ENCODE measurements at regions of chr17 and their contacts with region 1.

Region 1: DNA sequence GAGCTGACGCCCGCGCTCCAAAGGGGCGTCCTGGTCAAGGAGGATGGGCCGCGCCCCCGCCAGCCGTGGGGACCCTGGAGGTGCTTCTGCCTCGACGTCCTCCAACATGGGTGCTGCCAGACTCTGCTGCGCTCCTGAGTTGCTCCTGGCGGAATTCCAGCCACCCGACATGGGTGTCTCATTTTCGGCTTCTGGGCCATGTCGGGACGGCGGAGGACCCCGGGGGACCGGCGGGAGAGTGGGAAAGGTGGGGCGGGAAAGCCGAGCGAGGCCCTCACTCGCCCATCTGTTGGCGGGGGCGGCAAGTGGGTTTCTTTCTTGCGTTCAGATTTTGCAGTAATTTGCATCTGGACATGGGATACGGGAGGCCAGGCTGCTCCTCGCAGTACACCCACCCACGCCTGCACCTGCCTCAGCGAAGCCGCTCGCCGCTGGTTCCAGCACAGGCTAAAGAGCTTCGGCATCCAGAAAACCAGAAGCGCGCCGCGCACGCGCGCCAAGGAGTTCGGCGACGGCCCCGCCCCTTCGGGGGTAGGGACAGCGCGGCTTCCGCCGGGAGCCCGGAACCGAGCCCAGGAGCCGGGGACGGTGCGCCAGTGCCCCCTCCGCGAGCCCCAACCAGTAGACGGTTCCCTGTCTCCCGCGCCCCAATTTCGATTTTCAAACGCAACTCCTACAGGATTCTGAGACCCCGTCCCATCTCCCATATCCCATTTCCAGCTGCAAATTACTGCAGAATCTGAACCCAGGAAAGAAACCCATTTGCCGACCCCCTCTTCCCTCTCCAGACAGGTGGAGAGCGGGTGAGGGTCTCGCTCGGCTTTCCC is at the start of gene ARMC7:
- DNase-seq: peak; percentile 97
- CTCF ChIP-seq: no peak

Region 2: DNA sequence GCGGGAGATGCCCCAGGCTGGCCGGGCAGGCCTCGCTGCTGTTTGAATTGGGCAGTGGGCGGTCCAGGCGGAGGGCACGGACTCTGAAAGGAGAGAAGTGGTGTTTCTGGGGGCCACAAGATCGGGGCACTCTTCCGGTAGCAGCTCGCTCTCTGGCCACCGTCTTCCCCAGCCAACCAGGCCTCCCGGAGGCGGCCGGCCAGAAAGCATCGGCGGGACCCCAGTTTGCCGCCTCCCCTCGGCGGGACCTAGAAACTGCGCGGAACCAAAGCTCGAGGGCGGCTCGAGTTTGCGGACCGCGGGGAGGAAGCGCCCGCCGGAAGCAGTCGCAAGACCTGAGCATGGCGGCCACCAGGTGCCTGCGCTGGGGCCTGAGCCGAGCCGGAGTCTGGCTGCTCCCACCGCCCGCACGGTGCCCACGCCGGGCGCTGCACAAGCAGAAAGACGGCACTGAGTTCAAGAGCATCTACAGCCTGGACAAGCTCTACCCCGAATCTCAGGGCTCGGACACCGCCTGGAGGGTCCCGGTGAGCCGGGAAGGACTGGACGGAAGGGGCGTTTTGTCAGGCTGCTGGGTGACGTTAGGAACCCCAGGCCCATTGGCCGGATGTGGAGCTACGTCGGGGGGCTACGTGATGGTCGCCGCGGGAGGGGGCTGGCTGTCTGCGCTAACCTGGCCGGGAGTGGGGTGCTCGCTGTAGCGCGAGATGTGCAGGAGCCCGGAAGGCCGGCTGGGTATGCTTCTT is 97.1 kb before region 1 on chr17 and contains the start of gene MRPL58:
- CTCF ChIA-PET with region 1: interaction called, 13 read pairs
- POLR2A ChIA-PET with region 1: no interaction called
- DNase-seq: peak; percentile 94
- CTCF ChIP-seq: peak; percentile 39

Region 3: GRCh38 chr17:75069783-75070182 is 39.8 kb before region 1 on chr17:
- CTCF ChIA-PET with region 1: interaction called, 23 read pairs
- POLR2A ChIA-PET with region 1: no interaction called
- DNase-seq: no peak
- CTCF ChIP-seq: peak; percentile 35

Region 4: DNA sequence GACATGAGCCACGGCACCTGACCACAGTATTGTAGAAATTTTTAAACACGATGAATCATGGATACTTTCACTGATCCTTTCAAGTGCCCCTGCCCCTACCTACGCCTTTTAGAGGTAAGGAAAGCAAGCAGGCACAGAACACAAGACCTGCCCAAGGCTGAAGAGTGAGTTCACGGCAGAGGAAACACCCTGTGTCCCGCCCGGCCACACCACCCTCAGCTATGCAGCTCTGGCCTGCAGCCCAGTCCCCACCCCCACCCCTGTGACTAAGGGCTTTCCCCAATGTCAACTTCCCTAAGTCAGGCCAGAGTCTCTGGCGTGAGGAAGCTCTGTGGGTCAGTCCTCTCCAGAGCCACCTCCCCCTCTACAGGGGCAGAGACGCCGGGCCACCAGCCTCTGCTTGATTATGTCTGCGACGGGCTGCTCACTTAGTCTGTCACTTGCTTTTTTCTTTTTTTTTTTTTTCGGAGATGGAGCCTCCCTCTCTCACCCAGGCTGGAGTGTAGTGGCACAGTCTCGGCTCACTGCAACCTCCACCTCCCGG is 13.5 kb before region 1 on chr17:
- CTCF ChIA-PET with region 1: interaction called, 103 read pairs
- POLR2A ChIA-PET with region 1: no interaction called
- DNase-seq: peak; percentile 51
- CTCF ChIP-seq: no peak

Region 5: DNA sequence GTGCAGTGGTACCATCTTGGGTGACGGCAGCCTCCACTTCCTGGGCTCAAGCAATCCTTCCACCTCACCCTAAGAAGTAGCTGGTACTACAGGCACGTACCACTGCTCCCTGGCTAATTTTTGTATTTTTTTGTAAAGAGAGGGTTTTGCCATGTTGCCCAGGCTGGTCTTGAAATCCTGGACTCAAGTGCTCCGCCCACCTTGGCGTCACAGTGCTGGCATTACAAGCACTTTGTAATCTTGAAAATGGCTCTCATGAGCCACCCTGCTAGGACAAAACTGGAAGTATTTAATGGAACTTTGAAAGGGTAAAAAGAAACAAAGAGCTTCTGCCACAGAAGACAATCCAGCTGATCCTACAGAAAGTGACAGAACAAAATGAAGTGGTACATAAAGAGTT is 63.9 kb after region 1 on chr17:
- CTCF ChIA-PET with region 1: interaction called, 123 read pairs
- POLR2A ChIA-PET with region 1: interaction called, 5 read pairs
- DNase-seq: no peak
- CTCF ChIP-seq: no peak

Region 6: DNA sequence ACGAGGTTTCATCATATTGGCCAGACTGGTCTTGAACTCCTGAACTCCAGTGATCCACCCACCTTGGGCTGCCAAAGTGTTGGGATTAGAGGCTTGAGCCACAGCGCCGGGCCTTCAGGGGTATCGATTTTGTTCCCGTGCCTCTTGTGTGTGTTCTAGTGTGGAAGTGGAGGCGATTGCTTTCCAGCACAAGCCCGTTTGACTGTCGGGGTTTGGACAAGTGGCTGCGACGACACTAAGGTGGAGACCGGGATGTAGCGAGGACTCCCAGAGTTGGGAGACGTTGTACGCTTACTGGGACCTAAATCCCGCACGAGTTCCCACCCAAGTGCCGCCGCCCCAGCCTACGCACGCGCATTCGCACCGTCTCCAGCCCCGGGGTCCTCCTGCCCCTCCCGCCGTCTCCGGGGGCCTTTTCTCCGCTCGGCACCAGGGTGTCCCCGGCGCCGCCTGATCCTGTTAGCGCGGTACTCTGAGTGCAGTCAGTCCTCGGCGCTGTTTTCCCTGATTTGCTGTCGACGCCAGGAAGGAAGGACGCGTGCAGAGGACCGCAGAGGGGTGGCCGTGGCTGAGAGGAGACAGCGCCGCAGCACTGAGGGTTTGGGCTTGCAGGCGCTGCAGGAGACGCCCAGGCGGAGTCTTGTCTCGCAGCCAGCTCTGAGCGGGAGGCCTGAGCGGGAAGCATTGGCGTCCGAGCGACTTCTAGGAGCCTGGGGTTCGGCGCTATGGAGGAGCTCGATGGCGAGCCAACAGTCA is 95.6 kb after region 1 on chr17 and contains the start of gene NUP85:
- CTCF ChIA-PET with region 1: interaction called, 116 read pairs
- POLR2A ChIA-PET with region 1: no interaction called
- DNase-seq: peak; percentile 99
- CTCF ChIP-seq: no peak